ENCODE measurements at regions of chr1 and their contacts with region 1.

Region 1: DNA sequence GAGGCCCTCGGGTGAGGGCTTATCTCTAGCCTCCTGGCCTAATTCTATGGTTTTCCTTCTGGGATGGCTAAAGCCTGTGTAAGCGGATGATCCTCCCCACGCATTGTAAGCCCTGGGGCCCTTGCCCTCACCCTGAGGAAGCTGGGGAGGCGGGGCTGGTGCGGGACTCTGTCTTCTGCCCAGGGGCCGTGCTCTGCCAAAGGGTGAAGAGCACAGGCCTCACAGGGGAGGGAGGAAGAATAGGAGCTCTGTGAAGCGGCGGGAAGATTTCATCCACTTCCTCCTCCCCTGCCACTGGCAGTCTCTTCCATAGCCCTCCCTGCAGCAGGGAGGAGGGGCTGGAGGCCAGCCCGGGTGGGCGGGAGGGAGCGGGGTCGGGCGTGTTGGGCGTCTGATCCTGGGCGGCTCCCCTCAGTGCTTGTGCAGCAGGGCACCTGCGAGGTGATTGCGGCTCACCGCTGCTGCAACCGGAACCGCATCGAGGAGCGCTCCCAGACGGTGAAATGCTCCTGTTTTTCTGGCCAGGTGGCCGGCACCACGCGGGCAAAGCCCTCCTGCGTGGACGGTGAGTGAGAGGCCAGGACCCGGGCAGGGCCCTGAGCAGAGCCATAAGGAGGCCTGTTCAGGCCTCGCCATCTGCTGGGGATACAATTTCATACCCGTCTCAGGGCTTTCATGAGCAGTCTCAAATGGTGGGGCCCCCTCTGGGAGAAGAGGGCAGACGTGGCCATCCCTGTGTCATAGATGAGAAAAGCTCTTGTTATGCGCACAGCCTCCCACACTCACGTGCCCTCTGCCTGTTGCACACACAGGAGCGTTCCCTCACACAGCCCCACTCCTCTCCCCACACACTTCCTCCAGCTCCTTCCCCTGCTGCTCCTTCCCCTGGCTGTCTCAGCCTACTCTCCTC is 7.7 kb upstream of the PPM1J start:
- DNase-seq: no peak
- ATAC-seq: peak; percentile 49 to 50
- H3K4me3 ChIP-seq: no peak overlapping the region
- H3K27ac ChIP-seq: no peak overlapping the region
- H3K4me1 ChIP-seq: no peaks in the 10 kb centered on the region
- H3K27me3 ChIP-seq: no peaks in the 10 kb centered on the region

Region 2: GRCh38 chr1:113072757-113073478 is 350.1 kb after region 1 on chr1 and contains the start of gene LRIG2:
- intact Hi-C with region 1: loop called in 1 of 4 experiments (anchors 5 kb)
- DNase-seq: peak; percentile 99 to 100 (median 99)
- ATAC-seq: peak; percentile 100
- H3K4me3 ChIP-seq: peak within 1 kb of the TSS; percentile 90
- H3K27ac ChIP-seq: peak within 1 kb of the TSS; percentile 84
- H3K4me1 ChIP-seq: peaks cover 1% of the 10 kb centered on the region
- H3K27me3 ChIP-seq: no peaks in the 10 kb centered on the region
- total RNA-seq, gene LRIG2: 8.9 to 11.1 (median 9.8) TPM